OCI-LY7 (cell line): ENCODE measurements at regions of chr9 and their contacts with region 1.

Region 1: DNA sequence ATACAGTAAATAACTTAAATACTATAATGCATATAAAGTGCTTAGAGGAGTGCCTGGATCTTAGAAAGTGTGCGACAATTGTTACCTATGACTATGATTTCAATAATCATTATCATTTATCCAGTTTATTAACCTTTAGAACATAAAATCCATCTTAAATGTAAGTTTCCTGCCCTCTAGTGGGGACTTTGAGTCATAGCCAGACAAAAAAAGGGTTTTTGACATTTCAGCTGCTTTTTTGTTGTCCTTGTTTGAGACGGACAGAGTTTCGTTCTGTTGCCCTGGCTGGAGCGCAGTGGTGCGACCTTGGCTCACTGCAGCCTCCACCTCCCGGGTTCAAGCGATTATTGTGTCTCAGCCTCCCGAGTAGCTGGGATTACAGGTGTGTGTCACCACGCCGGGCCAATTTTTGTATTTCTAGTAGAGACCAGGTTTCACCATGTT is 9.7 kb upstream of the C9orf152 start:
- DNase-seq: peak; percentile 69
- H3K4me3 ChIP-seq: no peak overlapping the region
- H3K27ac ChIP-seq: no peak overlapping the region
- H3K4me1 ChIP-seq: peaks cover 13% of the 10 kb centered on the region
- CTCF ChIP-seq: peak; percentile 91

Region 2: GRCh38 chr9:109568568-109569210 is 649.0 kb before region 1 on chr9:
- CTCF ChIA-PET with region 1: no interaction called
- POLR2A ChIA-PET with region 1: no interaction called
- intact Hi-C with region 1: loop called (anchors 2 kb)
- DNase-seq: no peak
- H3K4me3 ChIP-seq: no peak overlapping the region
- H3K27ac ChIP-seq: no peak overlapping the region
- H3K4me1 ChIP-seq: no peaks in the 10 kb centered on the region
- CTCF ChIP-seq: no peak

Region 3: GRCh38 chr9:109705515-109705914 is 512.2 kb before region 1 on chr9:
- CTCF ChIA-PET with region 1: no interaction called
- POLR2A ChIA-PET with region 1: no interaction called
- intact Hi-C with region 1: loop called (anchors 10 kb)
- DNase-seq: peak; percentile 2
- H3K4me3 ChIP-seq: no peak overlapping the region
- H3K27ac ChIP-seq: no peak overlapping the region
- H3K4me1 ChIP-seq: no peaks in the 10 kb centered on the region
- CTCF ChIP-seq: 0 out of 2 replicates have a peak, but pooled peaks have one; percentile 21

Region 4: GRCh38 chr9:109880277-109881169 is 337.2 kb before region 1 on chr9:
- CTCF ChIA-PET with region 1: no interaction called
- POLR2A ChIA-PET with region 1: interaction called, 3 read pairs
- intact Hi-C with region 1: loop called (anchors 5 kb)
- DNase-seq: peak; percentile 76
- H3K4me3 ChIP-seq: peak overlapping the region; percentile 25
- H3K27ac ChIP-seq: no peak overlapping the region
- H3K4me1 ChIP-seq: no peaks in the 10 kb centered on the region
- CTCF ChIP-seq: peak; percentile 85

Region 5: GRCh38 chr9:110183208-110184145 is 34.2 kb before region 1 on chr9:
- CTCF ChIA-PET with region 1: interaction called, 3 read pairs
- POLR2A ChIA-PET with region 1: interaction called, 3 read pairs
- intact Hi-C with region 1: loop called (anchors 1 kb)
- DNase-seq: peak; percentile 76
- H3K4me3 ChIP-seq: no peak overlapping the region
- H3K27ac ChIP-seq: no peak overlapping the region
- H3K4me1 ChIP-seq: no peaks in the 10 kb centered on the region
- CTCF ChIP-seq: peak; percentile 93

Region 6: GRCh38 chr9:110623462-110624025 is 405.9 kb after region 1 on chr9:
- CTCF ChIA-PET with region 1: no interaction called
- POLR2A ChIA-PET with region 1: no interaction called
- intact Hi-C with region 1: loop called (anchors 10 kb)
- DNase-seq: peak; percentile 48
- H3K4me3 ChIP-seq: no peak overlapping the region
- H3K27ac ChIP-seq: no peak overlapping the region
- H3K4me1 ChIP-seq: no peaks in the 10 kb centered on the region
- CTCF ChIP-seq: peak; percentile 87